MCF 10A (cell line): ENCODE measurements at regions of chr7 and their contacts with region 1.

Region 1: GRCh38 chr7:51162724-51163329 is 153.8 kb downstream of the COBL start:
- DNase-seq: peak; percentile 89
- H3K4me3 Mint-ChIP-seq: no peak overlapping the region
- H3K27ac Mint-ChIP-seq: no peak overlapping the region
- H3K4me1 Mint-ChIP-seq: peaks cover 5% of the 10 kb centered on the region
- H3K27me3 Mint-ChIP-seq: no peaks in the 10 kb centered on the region
- CTCF ChIP-seq: peak; percentile 55

Region 2: GRCh38 chr7:50206453-50207250 is 956.2 kb before region 1 on chr7:
- CTCF ChIA-PET with region 1: interaction called, 18 read pairs
- POLR2A ChIA-PET with region 1: no interaction called
- intact Hi-C with region 1: loop called (anchors 1 kb)
- DNase-seq: no peak
- H3K4me3 Mint-ChIP-seq: no peak overlapping the region
- H3K27ac Mint-ChIP-seq: no peak overlapping the region
- H3K4me1 Mint-ChIP-seq: no peaks in the 10 kb centered on the region
- H3K27me3 Mint-ChIP-seq: peaks cover 56% of the 10 kb centered on the region
- CTCF ChIP-seq: no peak

Region 3: DNA sequence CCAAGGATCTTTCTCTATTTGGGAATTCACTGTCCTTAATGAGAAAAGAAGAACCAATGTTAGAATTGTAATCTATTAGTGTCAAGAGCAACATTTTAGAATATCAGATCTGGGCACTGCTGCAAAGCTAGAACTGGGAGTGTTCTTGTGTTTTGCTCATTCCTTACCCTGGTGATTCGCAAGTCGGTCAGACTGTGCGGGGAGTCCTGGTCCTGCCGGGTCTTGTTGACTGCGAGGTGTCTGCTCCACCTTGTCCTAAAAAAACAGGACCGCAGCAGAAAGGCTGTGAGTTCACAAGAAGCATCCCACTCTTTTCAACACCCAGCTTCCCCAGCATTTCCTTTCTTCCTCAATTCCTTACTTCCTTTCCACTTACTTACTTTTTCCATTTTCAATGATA is 459.2 kb before region 1 on chr7:
- CTCF ChIA-PET with region 1: interaction called, 13 read pairs
- POLR2A ChIA-PET with region 1: no interaction called
- intact Hi-C with region 1: no loop called
- DNase-seq: no peak
- H3K4me3 Mint-ChIP-seq: no peak overlapping the region
- H3K27ac Mint-ChIP-seq: no peak overlapping the region
- H3K4me1 Mint-ChIP-seq: peaks cover 16% of the 10 kb centered on the region
- H3K27me3 Mint-ChIP-seq: no peaks in the 10 kb centered on the region
- CTCF ChIP-seq: no peak

Region 4: DNA sequence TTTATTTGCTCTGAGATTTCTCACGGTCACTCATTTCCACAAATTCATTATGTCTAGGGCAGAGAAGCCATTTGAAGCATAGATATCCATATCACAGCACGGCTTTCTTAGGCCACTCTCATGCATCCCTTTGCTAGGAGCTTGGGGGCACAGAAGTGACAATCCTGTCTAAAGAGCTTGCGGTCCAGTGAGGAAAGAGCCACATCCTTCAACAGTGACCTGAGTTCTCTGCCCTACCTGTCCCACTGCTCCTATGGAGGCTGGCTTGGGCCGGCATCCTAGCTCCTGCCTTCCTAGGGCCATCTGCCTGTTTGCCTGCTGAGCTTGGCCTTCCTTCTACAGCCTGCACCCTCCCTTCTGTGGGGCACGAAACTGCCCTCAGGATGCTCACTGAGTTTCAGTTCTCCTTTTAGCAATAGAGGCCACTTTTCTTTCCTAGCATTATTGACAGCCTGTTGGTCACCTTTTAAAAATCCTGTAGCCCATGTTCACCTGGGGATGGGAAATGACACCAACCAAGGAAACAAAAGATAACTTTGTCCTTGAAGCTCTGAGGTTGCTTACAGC is 168.0 kb before region 1 on chr7:
- CTCF ChIA-PET with region 1: no interaction called
- POLR2A ChIA-PET with region 1: no interaction called
- intact Hi-C with region 1: no loop called
- DNase-seq: no peak
- H3K4me3 Mint-ChIP-seq: no peak overlapping the region
- H3K27ac Mint-ChIP-seq: no peak overlapping the region
- H3K4me1 Mint-ChIP-seq: no peaks in the 10 kb centered on the region
- H3K27me3 Mint-ChIP-seq: no peaks in the 10 kb centered on the region
- CTCF ChIP-seq: no peak

Region 5: DNA sequence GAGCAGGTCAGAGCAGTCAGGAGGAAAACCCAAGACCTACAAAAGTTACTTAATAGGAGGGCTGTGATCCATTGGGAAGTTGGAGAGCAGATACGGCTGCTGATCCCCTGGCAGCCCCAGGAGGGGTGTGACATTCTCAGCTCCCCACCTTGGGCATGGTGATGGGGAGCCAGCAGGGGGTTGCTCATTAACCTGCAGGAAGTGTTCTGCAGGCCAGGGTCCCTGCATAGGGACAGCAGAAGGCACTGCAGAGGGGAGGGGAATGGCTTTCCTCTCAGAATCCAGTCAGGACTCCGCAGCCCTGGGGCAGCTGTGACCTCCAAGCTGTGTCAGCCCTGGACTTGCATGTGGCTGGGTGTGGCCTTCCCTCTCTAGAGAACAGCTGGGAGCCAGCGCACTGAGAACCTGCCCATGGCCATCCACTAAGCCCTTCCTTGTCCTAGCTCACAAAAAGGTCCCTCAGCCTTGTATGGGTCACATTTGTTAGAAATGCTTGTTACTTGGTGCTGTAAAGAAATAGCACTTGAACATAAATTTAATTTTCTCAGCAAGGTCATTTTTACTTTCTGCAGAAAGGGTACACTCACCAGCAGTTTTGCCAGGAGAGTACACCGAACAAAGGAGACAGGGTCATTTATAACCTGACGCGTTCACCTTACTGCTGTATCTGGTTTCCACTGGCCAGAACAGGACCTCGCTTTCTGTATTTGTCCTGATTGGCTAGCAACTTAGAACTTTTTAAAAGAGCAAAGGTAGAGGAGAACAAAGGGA is 15.8 kb before region 1 on chr7:
- CTCF ChIA-PET with region 1: interaction called, 126 read pairs
- POLR2A ChIA-PET with region 1: no interaction called
- intact Hi-C with region 1: no loop called
- DNase-seq: no peak
- H3K4me3 Mint-ChIP-seq: no peak overlapping the region
- H3K27ac Mint-ChIP-seq: no peak overlapping the region
- H3K4me1 Mint-ChIP-seq: no peaks in the 10 kb centered on the region
- H3K27me3 Mint-ChIP-seq: no peaks in the 10 kb centered on the region
- CTCF ChIP-seq: no peak

Region 6: DNA sequence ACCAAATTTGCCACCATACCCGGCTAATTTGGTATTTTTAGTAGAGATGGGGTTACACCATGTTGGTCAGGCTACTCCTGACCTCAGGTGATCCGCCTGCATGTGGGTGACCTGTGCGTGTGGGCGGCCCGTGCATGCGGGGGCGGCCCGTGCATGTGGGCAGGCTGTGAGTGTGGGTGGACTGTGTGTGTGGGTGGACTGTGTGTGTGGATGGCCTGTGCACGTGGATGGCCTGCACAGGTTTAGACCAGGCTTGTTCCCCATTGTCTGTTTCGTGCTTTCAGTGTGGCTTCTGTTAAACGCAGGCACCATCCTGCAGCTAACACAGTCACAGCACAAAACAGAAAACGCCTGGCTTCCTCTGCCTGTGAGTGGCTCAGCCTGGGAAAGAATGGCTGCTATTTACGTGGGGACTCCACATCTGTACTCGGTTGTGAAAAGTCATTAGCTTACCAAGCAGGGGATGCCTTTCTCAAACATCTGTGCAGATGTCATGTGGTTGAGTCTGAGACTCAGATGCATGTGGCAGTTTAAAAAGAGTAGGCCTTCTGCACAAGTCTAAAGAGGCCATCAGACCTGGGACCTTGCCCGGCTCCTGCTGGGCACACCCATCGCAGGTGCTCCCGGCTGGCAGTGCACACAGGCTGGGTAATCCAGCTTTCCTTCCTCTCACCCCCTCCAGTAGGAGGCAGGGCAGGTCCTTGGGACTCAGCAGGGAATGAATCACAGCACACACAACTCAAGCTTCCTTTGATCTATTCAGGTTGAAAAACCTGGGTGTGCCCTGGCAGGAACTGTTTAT is 62.2 kb after region 1 on chr7:
- CTCF ChIA-PET with region 1: interaction called, 96 read pairs
- POLR2A ChIA-PET with region 1: no interaction called
- intact Hi-C with region 1: loop called (anchors 1 kb)
- DNase-seq: peak; percentile 79
- H3K4me3 Mint-ChIP-seq: no peak overlapping the region
- H3K27ac Mint-ChIP-seq: peak overlapping the region; percentile 5
- H3K4me1 Mint-ChIP-seq: peaks cover 26% of the 10 kb centered on the region
- H3K27me3 Mint-ChIP-seq: peaks cover 2% of the 10 kb centered on the region
- CTCF ChIP-seq: peak; percentile 47

Region 7: DNA sequence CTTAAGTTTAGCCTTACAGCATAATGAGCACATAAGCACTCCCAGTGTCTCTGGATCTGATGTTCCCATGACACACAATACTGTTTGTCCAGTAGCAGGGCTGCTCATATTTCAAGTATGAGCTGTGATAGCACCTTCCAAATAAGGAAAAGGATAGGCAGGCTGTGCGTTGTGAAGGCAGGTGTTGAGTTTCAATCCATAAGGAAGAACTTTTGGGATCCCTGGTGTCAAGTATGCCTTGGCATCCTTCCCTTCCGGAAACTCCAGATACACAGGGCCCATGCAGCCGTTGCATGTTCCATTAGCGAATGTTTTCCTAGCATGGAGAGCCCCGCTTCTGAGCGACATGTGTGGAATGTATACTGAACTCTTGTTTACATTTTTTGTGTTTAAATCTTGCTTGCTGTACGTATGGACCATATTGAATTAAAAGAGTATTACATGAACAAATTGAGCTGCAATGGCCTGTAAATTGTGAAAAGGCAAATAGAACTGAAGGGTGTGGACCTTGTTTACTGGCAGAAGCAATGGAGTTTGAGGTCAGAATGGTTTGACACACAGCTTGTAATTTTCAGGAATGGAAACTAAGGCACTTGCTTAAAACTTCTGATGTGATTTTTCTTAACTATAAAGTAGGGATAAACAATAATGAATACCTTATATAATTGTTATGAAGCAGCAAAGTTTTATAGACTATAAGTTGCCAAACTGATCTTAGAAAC is 187.5 kb after region 1 on chr7:
- CTCF ChIA-PET with region 1: interaction called, 284 read pairs
- POLR2A ChIA-PET with region 1: interaction called, 6 read pairs
- intact Hi-C with region 1: no loop called
- DNase-seq: peak; percentile 95
- H3K4me3 Mint-ChIP-seq: no peak overlapping the region
- H3K27ac Mint-ChIP-seq: peak overlapping the region; percentile 85
- H3K4me1 Mint-ChIP-seq: peaks cover 9% of the 10 kb centered on the region
- H3K27me3 Mint-ChIP-seq: no peaks in the 10 kb centered on the region
- CTCF ChIP-seq: no peak